ENCODE measurements at regions of chr11 and their contacts with region 1.

Region 1: DNA sequence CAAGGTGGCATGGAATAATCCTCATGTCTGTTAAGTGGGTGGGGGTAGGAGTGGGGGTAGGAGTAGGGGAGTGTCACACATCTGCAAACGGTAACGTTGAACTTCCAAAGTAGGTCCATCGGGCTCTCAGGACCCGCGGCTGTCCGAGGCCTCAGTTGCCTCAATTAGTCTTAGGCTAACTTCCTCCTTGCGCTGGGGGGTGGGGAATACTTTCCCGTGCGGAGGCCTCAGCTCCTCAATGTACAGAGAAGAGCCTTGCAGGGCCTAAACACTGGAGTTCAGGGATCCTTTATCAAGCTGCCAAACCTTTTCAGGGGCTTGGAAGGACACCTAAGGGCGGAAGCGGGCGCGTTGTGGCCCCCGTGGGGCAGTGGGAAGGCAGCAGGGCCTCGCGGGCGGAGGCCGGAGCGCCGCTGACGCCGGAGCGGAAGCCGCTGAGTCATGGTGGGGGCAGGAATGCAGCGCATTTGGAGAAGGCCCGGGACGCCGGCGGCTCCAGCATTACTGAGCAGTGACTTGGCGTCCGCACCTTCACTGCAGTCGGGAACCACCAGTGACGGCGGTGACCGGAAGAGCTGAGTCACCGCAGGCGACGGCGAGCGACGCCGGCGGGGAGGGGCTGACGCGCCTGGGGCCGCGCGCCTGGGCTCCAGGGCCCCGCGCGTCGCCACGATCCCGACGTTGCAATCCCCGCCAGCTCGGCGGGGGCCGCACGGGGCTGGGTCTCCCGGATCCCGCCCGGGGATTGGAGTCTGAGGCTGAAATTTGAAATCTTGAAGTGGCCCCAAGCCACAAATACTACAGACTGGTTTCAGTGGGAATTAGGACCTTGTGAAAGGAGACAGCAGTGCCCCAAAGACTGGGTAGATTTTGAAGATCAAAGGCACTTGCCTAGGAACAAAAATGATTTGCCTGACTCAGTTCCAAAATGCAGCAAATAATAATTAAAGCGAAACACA is 20.2 kb upstream of the IPO7 start:
- DNase-seq: peak; percentile 38 to 82 (median 66)
- ATAC-seq: peak; percentile 95
- H3K4me3 ChIP-seq: peak overlapping the region; percentile 85
- H3K4me3 Mint-ChIP-seq: peak overlapping the region; percentile 78 to 89 (median 84)
- H3K27ac ChIP-seq: peak overlapping the region; percentile 73
- H3K27ac Mint-ChIP-seq: peak overlapping the region; percentile 78 to 94 (median 90)
- H3K4me1 ChIP-seq: peaks cover 2 to 5% of the 10 kb centered on the region in 2 donors
- H3K4me1 Mint-ChIP-seq: peaks cover 0 to 30% (median 14%) of the 10 kb centered on the region in 7 donors
- H3K27me3 ChIP-seq: no peaks in the 10 kb centered on the region
- H3K27me3 Mint-ChIP-seq: no peaks in the 10 kb centered on the region

Region 2: DNA sequence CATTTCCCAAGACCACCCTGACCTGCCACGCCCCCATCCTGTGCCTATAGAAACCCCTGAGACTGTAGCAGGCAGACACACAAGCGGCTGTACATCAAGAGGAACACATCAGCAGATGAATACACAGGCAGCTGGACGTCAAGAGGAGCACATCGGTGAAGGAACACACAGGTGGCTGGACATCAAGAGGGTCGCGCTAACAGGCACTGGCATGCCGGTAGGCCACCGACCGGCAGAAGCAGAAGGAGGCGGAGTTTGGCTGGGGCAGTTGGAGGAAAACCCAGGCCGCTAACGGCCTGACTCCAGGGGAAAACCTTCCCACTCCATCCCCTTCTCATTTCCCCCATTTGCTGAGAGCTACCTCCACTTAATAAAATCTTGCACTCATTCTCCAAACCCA is 14.8 kb after region 1 on chr11:
- CTCF ChIA-PET with region 1: interaction called, 3 read pairs
- POLR2A ChIA-PET with region 1: no interaction called
- intact Hi-C with region 1: loop called (anchors 1 kb)
- DNase-seq: no peak
- ATAC-seq: no peak
- H3K4me3 ChIP-seq: no peak overlapping the region
- H3K4me3 Mint-ChIP-seq: peak overlapping the region in 1 of 10 donors; percentile 16
- H3K27ac ChIP-seq: no peak overlapping the region
- H3K27ac Mint-ChIP-seq: peak overlapping the region in 1 of 9 donors; percentile 46
- H3K4me1 ChIP-seq: no peaks in the 10 kb centered on the region
- H3K4me1 Mint-ChIP-seq: peaks cover under 1 to 5% (median under 1%) of the 10 kb centered on the region in 7 donors
- H3K27me3 ChIP-seq: no peaks in the 10 kb centered on the region
- H3K27me3 Mint-ChIP-seq: peaks cover 0 to 10% (median 0%) of the 10 kb centered on the region in 5 donors